Prostate gland (tissue), 2 donors: ENCODE measurements at regions of chr1 and their contacts with region 1.

Region 1: DNA sequence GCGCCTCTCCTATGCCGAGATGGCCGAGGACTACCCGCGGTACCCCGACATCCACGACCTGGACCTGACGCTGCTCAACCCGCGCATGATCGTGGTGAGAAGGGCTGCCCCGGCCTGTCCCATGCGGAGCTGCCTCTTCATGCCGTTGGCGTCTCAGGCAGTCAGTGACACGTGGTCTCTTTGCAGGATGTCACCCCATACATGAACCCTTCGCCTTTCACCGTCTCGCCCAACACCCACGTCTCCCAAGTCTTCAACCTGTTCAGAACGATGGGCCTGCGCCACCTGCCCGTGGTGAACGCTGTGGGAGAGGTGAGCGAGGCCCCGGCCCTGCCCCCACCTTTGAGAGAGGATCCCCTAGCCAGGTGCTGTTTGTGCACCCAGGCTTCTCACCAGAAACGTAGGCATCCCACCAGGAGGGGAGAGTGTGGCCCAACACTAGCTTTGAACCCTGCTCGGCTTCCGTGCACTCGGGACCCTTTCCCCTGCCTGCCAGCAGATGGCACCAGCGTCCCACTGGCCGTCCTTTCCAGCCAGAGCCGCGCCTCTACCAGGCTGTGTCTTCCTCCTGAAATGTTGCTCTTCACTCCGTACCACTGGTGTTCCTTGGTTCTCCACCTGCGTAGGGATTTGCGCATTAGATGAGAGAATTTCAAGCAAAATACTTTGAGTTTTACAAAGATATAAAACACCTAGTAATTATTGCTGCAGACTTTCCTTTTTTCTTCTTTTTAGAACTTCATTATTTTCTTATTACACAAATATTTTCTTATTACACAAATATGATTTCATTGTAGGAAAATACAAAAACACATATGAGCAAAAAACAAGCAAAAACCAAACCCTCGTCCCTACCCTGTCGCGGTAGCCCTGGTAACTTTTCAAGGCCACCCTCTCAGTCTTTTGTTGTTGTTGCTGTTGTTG is 9.0 kb downstream of the NPPA start:
- DNase-seq: peak; percentile 56
- H3K4me3 ChIP-seq: no peak overlapping the region
- H3K27ac ChIP-seq: no peak overlapping the region
- H3K4me1 ChIP-seq: no peaks in the 10 kb centered on the region
- H3K27me3 ChIP-seq: no peaks in the 10 kb centered on the region
- CTCF ChIP-seq: peak; percentile 83 to 96 (median 88)
- POLR2A ChIP-seq: no peak

Region 2: GRCh38 chr1:11707621-11708276 is 130.9 kb before region 1 on chr1:
- intact Hi-C with region 1: no loop called
- DNase-seq: peak; percentile 69
- H3K4me3 ChIP-seq: no peak overlapping the region
- H3K27ac ChIP-seq: no peak overlapping the region
- H3K4me1 ChIP-seq: no peaks in the 10 kb centered on the region
- H3K27me3 ChIP-seq: no peaks in the 10 kb centered on the region
- CTCF ChIP-seq: no peak
- POLR2A ChIP-seq: no peak

Region 3: DNA sequence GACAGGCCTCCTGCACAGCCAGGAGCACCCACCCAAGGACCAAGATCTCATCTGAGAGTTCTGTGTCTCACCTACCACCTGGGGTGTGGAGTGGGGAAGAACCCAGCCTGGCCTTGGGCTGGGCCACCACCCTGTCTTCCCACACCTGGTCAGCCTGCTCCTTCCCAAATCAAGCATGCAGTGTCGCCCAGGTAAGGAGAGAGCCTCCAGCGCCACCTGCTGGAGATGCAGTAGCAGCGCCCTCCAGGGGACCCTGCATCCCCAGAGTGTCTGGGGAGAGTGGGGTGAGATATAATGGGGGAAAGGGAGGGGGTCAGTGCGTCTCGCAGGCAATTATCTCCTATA is 55.3 kb after region 1 on chr1:
- intact Hi-C with region 1: loop called (anchors 2 kb)
- DNase-seq: peak; percentile 37
- H3K4me3 ChIP-seq: no peak overlapping the region
- H3K27ac ChIP-seq: no peak overlapping the region
- H3K4me1 ChIP-seq: no peaks in the 10 kb centered on the region
- H3K27me3 ChIP-seq: peaks cover 2% of the 10 kb centered on the region
- CTCF ChIP-seq: peak; percentile 71 to 85 (median 76)
- POLR2A ChIP-seq: no peak

Region 4: GRCh38 chr1:11967028-11967547 is 128.5 kb after region 1 on chr1:
- intact Hi-C with region 1: loop called (anchors 5 kb)
- DNase-seq: peak; percentile 40
- H3K4me3 ChIP-seq: no peak overlapping the region
- H3K27ac ChIP-seq: no peak overlapping the region
- H3K4me1 ChIP-seq: no peaks in the 10 kb centered on the region
- H3K27me3 ChIP-seq: no peaks in the 10 kb centered on the region
- CTCF ChIP-seq: peak in 2 of 4 experiments; percentile 52 to 74
- POLR2A ChIP-seq: no peak

Region 5: DNA sequence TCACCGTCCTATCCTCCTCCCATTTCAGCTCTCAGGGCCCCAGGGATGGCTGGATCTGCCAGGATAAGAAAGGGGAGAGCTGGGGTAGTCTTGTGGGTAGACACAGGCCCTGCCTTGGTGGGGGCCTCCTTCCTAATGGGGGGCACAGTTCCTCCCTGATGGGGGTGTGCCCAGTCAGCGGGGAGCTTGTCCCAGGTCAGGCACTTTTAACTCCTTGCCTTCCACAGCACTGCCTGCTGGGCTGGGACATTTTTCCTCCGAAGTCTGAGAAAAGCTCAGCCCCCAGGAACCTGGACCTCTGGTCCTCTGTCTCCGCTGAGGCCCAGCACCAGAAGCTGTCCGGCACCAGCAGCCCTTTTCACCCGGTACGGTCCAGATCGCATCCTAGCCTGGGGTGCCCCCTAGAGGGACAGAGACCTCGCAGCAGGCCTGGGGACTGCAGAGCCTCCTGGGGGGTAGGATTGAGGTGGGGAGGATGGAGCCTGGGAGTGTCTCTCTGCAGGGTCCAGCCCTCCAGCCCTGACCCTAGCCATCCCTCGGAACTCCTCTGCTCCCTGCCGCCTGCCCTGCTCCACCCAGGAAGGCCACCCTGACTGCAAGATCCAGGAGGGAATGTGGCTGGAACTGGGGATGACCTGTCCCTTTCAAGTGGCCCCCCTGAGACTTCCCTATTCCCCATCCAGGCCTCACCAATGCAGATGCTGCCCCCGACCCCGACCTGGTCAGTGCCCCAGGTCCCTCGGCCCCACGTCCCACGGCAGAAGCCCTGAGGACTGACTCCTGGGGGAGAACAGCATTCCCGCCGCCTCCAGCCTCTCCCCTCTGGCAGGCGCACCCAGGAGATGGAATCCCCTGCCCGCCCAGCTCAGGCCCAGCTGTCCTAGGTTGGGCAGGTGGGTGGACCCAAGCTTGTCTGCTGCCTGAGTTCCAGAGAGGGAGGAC is 192.7 kb after region 1 on chr1:
- intact Hi-C with region 1: loop called (anchors 2 kb)
- DNase-seq: no peak
- H3K4me3 ChIP-seq: no peak overlapping the region
- H3K27ac ChIP-seq: no peak overlapping the region
- H3K4me1 ChIP-seq: no peaks in the 10 kb centered on the region
- H3K27me3 ChIP-seq: no peaks in the 10 kb centered on the region
- CTCF ChIP-seq: peak in 1 of 4 experiments; percentile 36
- POLR2A ChIP-seq: no peak

Region 6: GRCh38 chr1:12208764-12209494 is 370.3 kb after region 1 on chr1:
- intact Hi-C with region 1: loop called (anchors 5 kb)
- DNase-seq: peak; percentile 76
- H3K4me3 ChIP-seq: no peak overlapping the region
- H3K27ac ChIP-seq: no peak overlapping the region
- H3K4me1 ChIP-seq: no peaks in the 10 kb centered on the region
- H3K27me3 ChIP-seq: no peaks in the 10 kb centered on the region
- CTCF ChIP-seq: peak; percentile 91 to 98 (median 95)
- POLR2A ChIP-seq: no peak